ENCODE measurements at regions of chr4 and their contacts with region 1.

Region 1: DNA sequence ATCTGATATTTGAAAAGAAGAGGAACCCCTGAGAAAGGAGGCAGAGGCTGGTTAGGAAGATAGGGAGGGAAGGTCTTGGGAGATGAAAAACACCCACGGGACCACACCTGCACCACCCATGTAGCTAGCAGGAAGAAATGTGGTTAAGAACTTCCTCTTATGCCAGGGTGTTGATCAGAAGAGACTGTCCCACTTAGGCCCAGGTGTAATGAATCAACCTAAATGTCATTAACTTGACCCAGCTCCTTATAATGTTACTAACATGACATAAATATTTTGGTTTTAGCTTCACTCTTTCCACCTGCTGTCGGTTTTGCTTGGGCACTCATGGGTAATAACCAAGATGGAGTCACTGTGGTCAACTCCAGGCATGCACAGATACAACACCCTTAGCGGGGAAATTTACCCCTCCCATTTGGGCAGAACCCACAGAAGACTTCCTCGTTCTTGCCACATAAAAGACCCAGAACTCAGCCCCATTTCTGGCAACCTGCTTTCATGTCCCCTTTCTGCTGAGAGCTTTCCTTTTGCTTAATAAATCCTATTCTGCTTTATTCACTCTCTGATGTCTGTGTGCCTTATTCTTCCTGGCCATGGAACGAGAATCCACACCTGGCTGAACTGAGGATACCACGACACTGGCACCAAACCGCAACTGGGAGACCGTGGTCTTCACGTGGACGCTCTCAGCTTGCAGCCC is 46.8 kb downstream of the ZNF141 start:
- DNase-seq: no peak
- H3K4me3 ChIP-seq: peak overlapping the region in 1 of 4 donors; percentile 6
- H3K27ac ChIP-seq: no peak overlapping the region
- H3K4me1 ChIP-seq: no peaks in the 10 kb centered on the region
- H3K27me3 ChIP-seq: no peaks in the 10 kb centered on the region
- CTCF ChIP-seq: no peak
- POLR2A ChIP-seq: no peak

Region 2: DNA sequence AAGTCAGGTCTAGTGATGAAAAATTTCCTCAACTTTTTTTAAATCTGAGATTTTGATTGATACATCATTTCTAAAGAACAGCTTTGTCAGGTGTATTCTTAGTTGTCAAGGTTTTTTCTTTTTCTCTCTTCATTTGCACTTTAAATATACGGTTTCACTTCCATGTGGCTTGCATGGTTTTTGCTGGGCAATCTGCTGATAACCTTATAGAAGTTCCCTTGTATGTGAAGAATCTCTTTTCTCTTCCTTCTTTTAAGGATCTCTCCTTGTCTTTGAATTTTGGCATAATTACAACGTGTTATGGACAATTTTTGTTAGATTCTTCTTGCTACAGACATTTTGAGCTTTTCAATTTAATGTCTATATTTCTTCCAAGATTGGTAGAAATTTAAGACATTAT is 38.1 kb after region 1 on chr4:
- intact Hi-C with region 1: loop called in 1 of 2 experiments (anchors 2 kb)
- DNase-seq: no peak
- H3K4me3 ChIP-seq: no peak overlapping the region
- H3K27ac ChIP-seq: no peak overlapping the region
- H3K4me1 ChIP-seq: no peaks in the 10 kb centered on the region
- H3K27me3 ChIP-seq: no peaks in the 10 kb centered on the region
- CTCF ChIP-seq: no peak
- POLR2A ChIP-seq: no peak

Region 3: DNA sequence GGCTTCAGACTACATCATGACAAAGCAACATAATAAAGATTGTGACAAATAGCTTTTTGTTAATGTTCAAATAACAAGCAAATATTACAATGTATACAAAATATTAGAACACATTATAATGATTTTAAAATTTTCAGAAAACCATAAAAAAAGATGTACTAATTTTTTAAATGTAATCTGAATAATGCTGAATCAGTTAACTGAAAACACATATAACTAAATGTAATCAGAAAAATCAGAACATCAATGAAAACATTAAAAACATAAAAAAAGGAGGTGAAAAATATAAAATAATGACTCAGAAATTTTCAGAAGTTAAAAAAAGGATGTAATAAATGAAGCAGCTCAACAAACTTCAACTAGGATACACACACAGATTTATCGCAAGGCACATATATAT is 60.9 kb after region 1 on chr4:
- intact Hi-C with region 1: loop called in 1 of 2 experiments (anchors 5 kb)
- DNase-seq: no peak
- H3K4me3 ChIP-seq: peak overlapping the region in 1 of 4 donors; percentile 26
- H3K27ac ChIP-seq: no peak overlapping the region
- H3K4me1 ChIP-seq: no peaks in the 10 kb centered on the region
- H3K27me3 ChIP-seq: no peaks in the 10 kb centered on the region
- CTCF ChIP-seq: no peak
- POLR2A ChIP-seq: no peak

Region 4: DNA sequence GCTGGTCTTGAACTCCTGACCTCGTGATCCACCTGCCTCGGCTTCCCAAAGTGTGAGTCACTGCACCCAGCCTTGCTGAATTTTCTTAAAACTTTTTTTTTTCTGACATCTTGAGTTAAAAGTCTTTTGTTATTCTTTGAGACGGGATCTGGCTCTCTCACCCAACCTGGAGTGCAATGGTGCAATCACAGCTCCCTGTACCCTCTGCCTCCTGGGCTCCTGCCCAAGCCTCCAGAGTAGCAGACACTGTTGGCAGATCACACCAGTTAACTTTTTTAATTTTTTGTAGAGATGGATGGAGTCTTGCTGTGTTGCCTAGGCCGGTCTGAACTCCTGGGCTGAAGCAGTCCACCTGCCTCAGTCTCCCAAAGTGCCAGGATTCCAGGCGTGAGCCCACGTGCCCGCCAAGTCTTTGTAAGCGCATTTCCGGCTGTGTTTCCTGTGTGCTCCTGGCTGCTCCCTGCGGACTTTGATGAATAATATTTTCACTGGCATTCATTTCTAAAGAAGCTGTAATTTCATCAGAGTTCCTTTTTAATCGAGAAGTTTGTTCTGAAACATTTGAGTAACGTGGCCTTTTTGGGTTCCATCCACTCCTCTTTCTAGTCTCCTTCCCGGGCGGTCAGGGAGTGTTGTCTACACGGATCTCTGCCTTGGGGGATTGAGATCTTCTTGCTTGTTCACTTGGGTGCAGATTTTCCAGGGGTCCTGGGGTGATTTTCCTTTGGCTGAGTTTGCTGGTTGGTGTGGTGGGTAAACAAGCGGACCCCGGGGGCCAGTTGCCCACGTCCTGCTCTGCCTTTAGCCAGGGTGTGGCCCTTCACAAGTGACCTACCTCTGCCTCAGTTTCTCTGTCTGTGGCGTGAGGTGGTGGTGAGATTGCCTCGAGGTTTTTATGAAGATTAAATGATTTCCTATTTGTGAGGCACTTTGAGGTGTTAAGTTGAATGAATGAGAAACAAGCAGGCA is 365.5 kb after region 1 on chr4:
- intact Hi-C with region 1: no loop called
- DNase-seq: peak in 6 of 7 donors; percentile 66 to 88 (median 74)
- H3K4me3 ChIP-seq: no peak overlapping the region
- H3K27ac ChIP-seq: peak overlapping the region in 4 of 5 donors; percentile 23 to 85 (median 62)
- H3K4me1 ChIP-seq: peaks cover 0 to 21% of the 10 kb centered on the region in 2 donors
- H3K27me3 ChIP-seq: no peaks in the 10 kb centered on the region
- CTCF ChIP-seq: peak in 1 of 6 experiments; percentile 19
- POLR2A ChIP-seq: no peak